Activated CD4-positive, alpha-beta T cell treated with anti-CD3 and anti-CD28 coated beads, Interleukin-2, amount 10 ng/mL, durations not matched to agents 24 days and 14 days (primary cell): ENCODE measurements at regions of chr13 and their contacts with region 1.

Region 1: GRCh38 chr13:24922745-24923591 is 159.0 kb downstream of the RNF17 start:
- DNase-seq: peak; percentile 99
- H3K4me3 Mint-ChIP-seq: peak overlapping the region; percentile 99
- H3K27ac Mint-ChIP-seq: peak overlapping the region; percentile 93
- H3K4me1 Mint-ChIP-seq: peaks cover 21% of the 10 kb centered on the region
- H3K27me3 Mint-ChIP-seq: peaks cover 12% of the 10 kb centered on the region

Region 2: GRCh38 chr13:24943136-24943535 is 20.2 kb after region 1 on chr13:
- intact Hi-C with region 1: loop called (anchors 2 kb)
- DNase-seq: no peak
- H3K4me3 Mint-ChIP-seq: no peak overlapping the region
- H3K27ac Mint-ChIP-seq: no peak overlapping the region
- H3K4me1 Mint-ChIP-seq: peaks cover under 1% of the 10 kb centered on the region
- H3K27me3 Mint-ChIP-seq: peaks cover 26% of the 10 kb centered on the region

Region 3: GRCh38 chr13:25301347-25302047 is 378.5 kb after region 1 on chr13 and contains the start of gene NUP58:
- intact Hi-C with region 1: loop called (anchors 2 kb)
- DNase-seq: peak; percentile 98
- H3K4me3 Mint-ChIP-seq: peak within 1 kb of the TSS; percentile 96
- H3K27ac Mint-ChIP-seq: peak within 1 kb of the TSS; percentile 96
- H3K4me1 Mint-ChIP-seq: peaks cover 40% of the 10 kb centered on the region
- H3K27me3 Mint-ChIP-seq: peaks cover 20% of the 10 kb centered on the region
- total RNA-seq, gene NUP58: 143 and 149 TPM in 2 replicates

Region 4: DNA sequence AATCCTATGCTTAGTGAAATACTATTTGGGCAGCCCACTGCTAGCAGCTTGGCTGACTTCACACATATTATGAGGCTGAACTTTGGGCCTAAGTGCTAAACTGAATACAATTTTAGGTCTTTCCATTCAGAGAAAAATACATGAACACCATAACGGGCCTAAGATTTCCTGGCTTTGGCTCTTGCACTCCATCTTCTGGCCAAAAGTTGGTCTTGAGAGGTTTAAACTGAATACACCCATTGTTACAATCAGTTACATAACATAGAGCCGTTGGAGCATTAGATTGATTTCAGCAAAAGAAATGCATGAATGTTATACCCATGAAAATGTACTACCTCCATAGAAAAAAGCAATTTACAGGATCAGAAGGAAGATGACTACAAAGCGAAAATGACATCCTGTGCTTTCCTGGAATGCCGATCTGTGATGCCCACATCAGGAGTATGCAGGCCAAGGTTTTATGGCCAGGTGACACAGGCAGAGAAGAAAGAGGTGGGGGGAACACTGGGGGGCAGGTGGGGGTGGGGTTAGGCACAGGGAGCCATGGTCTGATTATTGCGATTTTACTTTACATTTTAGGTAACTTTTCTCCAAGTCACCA is 1140.0 kb after region 1 on chr13:
- intact Hi-C with region 1: no loop called
- DNase-seq: peak; percentile 86
- H3K4me3 Mint-ChIP-seq: no peak overlapping the region
- H3K27ac Mint-ChIP-seq: no peak overlapping the region
- H3K4me1 Mint-ChIP-seq: peaks cover 15% of the 10 kb centered on the region
- H3K27me3 Mint-ChIP-seq: peaks cover 15% of the 10 kb centered on the region